ENCODE measurements at regions of chr1 and their contacts with region 1.

Region 1: DNA sequence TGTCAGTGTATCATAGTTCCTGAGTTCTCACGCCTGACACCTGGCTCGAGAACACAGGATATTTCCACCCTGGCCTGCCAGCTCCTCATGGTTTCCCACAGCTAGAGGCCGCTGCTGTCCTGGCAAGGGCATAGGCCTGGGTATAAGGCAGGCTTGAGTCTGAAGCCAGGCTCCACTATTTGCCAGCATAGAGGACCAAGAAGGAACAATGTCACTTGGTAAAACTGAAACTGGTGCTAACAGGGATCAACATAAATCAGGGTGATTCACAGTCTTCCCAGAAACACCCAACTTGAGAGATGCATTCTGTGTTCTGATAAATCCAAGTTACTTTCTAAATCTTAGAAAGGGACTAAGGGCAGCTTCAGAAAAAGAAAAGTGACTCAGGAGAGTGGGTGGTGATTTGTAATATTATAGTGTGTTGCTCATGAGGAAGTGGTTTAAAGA is 6.9 kb upstream of the S100A2 start:
- DNase-seq: peak; percentile 93
- H3K4me3 ChIP-seq: no peak overlapping the region
- H3K27ac ChIP-seq: no peak overlapping the region
- H3K4me1 ChIP-seq: peaks cover 15% of the 10 kb centered on the region
- H3K27me3 ChIP-seq: no peaks in the 10 kb centered on the region
- CTCF ChIP-seq: peak; percentile 89 to 96
- POLR2A ChIP-seq: no peak

Region 2: DNA sequence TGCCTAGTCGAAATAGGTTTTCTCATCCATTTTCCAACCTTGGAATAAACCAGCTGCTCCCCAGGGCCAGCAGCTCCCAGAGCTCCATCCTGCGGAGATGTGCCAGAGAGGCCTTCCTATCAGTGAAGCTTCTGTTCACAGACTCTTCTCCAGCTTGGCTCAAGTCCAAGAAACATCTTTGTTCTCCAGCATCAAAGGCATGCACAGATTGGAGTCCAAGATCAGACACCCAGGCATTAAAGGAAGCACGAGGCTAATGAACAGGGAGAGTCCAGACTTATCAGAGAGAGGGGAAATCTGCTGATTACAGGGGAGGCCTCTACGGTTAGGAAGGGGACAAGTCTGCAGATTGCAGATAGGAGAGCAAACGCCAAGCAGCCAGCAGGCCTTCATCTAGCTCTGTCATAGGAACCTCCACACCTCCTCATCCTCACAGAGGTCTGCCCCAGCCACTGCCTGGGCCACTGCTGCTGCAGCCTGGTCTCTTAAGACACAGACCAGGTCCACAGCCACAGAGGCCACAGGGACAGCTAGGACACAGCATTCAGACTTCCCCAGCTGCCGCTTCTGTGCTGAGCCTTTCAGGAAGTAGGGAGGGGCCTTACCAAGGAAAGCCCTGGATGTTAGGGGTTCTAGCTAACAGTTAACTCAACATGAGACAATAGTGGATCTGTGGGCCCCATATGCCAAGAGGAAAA is 351.8 kb before region 1 on chr1:
- CTCF ChIA-PET with region 1: no interaction called
- POLR2A ChIA-PET with region 1: no interaction called
- dilution Hi-C with region 1: no loop called
- intact Hi-C with region 1: no loop called
- DNase-seq: no peak
- H3K4me3 ChIP-seq: no peak overlapping the region
- H3K27ac ChIP-seq: no peak overlapping the region
- H3K4me1 ChIP-seq: no peaks in the 10 kb centered on the region
- H3K27me3 ChIP-seq: no peaks in the 10 kb centered on the region
- CTCF ChIP-seq: no peak
- POLR2A ChIP-seq: no peak

Region 3: DNA sequence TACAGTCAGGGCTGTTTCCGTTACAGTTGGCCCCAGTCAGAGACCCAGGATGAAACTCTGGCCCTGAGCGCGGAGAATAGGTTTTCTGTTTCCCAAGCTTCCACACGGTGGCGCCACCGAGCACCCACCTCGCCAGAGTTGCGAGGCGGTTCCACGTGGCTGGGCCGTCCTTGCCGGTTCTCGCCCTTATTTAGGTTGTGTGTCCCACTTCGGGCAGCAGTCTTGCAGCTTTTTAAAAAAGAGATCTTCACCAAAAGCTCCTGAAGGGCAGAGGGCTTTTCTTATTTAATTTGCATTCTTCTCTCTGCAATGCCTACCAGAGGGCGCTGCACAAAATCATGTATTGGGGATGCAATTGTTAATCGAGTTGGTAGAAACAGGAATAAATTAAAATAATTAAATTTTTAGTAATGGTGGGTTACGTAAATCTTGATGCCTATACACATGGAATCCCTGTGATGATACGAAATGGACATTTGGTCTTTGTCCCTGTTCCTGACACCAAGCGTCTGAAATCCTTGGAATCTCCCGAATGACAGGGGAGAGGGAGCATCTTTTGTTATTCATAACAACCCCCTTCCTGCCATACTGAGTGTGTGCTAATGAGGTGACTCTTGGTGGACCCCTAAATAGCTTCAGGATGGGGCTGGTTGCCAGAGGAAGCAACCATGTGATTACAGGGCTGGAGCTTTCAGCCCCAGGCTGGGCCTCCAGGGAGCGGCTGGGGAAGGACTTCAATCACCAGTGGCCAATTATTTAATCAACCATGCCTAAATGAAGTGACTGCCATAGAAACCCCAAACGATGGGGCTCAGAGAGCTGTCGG is 106.6 kb before region 1 on chr1:
- CTCF ChIA-PET with region 1: no interaction called
- POLR2A ChIA-PET with region 1: no interaction called
- dilution Hi-C with region 1: no loop called
- intact Hi-C with region 1: loop called (anchors 1 kb)
- DNase-seq: peak; percentile 9
- H3K4me3 ChIP-seq: no peak overlapping the region
- H3K27ac ChIP-seq: no peak overlapping the region
- H3K4me1 ChIP-seq: no peaks in the 10 kb centered on the region
- H3K27me3 ChIP-seq: peaks cover 0 to 13% of the 10 kb centered on the region in 2 experiments
- CTCF ChIP-seq: peak; percentile 75 to 90
- POLR2A ChIP-seq: no peak

Region 4: DNA sequence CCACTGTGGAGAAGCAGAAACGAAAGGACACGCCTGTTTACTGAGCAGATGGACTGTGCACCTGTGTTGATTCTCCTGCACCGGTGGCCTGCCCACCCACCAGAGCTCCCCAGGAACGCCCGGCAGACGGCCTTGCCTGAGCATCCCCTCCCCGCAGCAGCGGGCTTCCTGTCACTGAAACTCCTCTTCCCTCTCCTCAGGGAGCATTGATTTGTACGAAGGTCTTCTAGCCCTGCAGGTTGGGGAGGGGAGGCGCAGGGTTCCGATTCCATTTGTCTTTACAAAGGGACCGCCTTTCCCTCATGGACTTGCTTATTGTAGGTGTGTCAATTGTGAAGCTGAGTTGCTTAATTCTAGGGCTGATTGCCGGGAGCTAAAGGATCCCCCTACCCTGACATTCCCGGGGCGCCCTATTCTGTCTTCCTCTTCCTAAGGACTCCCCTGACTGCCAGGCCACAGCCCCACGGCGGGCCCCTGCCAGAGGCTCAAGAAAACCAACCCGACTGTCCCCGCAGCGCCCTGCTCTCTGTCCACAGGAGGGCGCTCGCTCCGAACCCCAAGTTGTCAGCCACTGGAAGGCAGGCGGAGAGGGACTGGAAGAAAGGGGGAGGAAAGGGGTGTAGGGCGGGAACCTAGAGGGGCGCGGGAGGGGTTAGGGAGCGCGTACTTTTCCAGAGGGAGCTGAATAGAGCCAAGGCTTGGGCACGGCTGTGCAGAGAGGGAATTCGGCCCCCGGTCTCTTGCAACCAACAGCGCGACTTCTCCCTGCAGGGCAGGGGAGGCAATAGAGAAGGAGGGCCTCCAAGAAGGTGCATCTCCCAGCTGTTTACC is 39.6 kb before region 1 on chr1:
- CTCF ChIA-PET with region 1: interaction called, 216 read pairs
- POLR2A ChIA-PET with region 1: interaction called, 14 read pairs
- dilution Hi-C with region 1: no loop called
- intact Hi-C with region 1: loop called (anchors 1 kb)
- DNase-seq: peak; percentile 85
- H3K4me3 ChIP-seq: peak overlapping the region in 2 of 3 experiments; percentile 5 to 81
- H3K27ac ChIP-seq: peak overlapping the region; percentile 96
- H3K4me1 ChIP-seq: peaks cover 43% of the 10 kb centered on the region
- H3K27me3 ChIP-seq: no peaks in the 10 kb centered on the region
- CTCF ChIP-seq: peak; percentile 90
- POLR2A ChIP-seq: no peak

Region 5: GRCh38 chr1:153608742-153609584 is 36.4 kb after region 1 on chr1:
- CTCF ChIA-PET with region 1: interaction called, 121 read pairs
- POLR2A ChIA-PET with region 1: interaction called, 6 read pairs
- dilution Hi-C with region 1: no loop called
- intact Hi-C with region 1: loop called (anchors 1 kb)
- DNase-seq: peak; percentile 98
- H3K4me3 ChIP-seq: peak overlapping the region; percentile 2 to 87 (median 86)
- H3K27ac ChIP-seq: peak overlapping the region; percentile 98
- H3K4me1 ChIP-seq: peaks cover 40% of the 10 kb centered on the region
- H3K27me3 ChIP-seq: no peaks in the 10 kb centered on the region
- CTCF ChIP-seq: no peak
- POLR2A ChIP-seq: peak; percentile 93

Region 6: DNA sequence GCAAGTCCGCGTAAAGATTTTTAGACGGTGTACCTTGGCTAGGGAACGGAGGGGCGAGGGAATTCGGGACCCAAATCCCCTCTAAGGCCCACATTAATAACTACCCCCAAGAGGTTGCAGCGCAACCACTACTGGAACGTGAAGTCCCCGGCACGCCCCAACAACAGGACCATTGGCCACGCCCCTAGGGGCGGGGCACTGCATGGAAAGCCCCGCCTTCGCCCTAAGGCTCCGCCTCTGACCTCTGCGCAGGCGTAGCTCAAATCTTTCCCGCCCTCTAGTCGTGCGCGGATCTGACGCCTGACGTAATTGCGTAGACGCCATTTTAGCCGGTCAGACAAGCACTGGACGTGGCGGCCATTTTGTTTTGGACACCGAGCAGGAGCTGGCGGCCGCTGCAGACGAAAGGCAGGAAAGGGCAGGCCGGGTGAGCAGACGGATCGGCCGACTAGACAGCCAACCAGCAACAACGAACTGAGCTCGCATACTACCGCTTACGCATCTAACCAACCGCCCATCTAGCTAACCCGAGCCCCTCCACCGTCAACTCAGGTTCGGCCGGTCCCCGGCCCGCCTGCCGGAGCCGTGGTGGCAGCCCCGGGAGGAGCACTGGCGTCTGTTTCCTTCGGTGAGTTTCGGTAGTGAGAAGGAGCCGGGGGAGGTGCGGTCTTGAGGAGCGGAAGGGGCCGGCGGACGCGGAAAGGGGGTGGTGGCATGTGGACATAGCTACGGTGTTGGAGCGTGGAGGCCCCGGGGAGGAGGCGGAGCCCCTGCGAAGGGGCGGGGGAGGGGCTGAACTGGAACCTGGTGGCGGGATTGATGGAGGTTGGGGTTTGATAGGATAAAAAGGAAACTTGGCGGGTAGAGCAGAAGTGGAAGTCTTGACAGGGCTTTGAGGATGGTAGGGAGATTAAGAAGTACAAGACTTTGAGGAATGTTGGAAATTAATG is 61.4 kb after region 1 on chr1 and contains the start of gene CHTOP:
- CTCF ChIA-PET with region 1: interaction called, 145 read pairs
- POLR2A ChIA-PET with region 1: interaction called, 6 read pairs
- dilution Hi-C with region 1: no loop called
- intact Hi-C with region 1: loop called (anchors 1 kb)
- DNase-seq: peak; percentile 100
- H3K4me3 ChIP-seq: peak within 1 kb of the TSS; percentile 65 to 96 (median 93)
- H3K27ac ChIP-seq: peak within 1 kb of the TSS; percentile 94
- H3K4me1 ChIP-seq: peaks cover 11% of the 10 kb centered on the region
- H3K27me3 ChIP-seq: no peaks in the 10 kb centered on the region
- CTCF ChIP-seq: no peak
- POLR2A ChIP-seq: peak; percentile 78
- total RNA-seq, gene CHTOP: 72.1 and 74.4 TPM in 2 replicates

Region 7: DNA sequence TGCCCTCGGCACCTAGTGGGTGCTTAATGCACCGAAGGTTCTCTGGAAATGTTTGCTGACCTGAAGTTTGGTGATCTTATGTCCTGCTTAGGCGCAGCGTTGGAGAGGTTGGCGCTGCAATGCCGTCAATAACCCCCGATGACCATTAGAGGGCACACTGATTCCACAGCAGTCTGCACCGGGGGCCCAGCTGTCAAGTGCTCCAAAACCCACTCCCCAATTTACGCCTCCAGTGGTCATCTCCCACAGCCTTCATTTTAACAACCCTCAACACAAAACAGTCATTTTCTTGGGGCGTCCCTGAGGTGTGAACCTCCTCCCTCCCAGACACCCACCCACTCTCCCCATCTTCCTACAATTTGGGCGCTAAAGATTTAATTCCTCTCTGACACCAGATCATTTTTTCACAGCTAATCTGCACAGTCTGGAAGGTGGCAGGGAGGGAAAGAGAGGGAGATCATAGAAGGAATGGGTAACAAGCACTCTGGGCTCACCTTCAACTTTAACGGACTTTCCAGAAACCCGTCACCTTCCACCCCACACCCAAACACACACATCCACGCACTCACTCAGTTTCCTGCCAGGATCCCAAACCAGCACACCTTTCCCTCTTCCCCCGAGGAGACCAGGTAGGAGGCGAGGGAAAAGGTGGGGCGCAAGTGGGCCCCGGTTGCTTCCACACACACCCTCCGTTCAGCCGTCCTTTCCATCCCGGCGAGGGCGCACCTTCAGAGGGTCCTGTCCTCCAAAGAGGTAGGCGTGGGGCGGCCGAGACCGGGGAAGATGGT is 105.3 kb after region 1 on chr1:
- CTCF ChIA-PET with region 1: interaction called, 5 read pairs
- POLR2A ChIA-PET with region 1: no interaction called
- dilution Hi-C with region 1: no loop called
- intact Hi-C with region 1: loop called (anchors 1 kb)
- DNase-seq: peak; percentile 72
- H3K4me3 ChIP-seq: peak overlapping the region; percentile 15 to 44 (median 22)
- H3K27ac ChIP-seq: no peak overlapping the region
- H3K4me1 ChIP-seq: peaks cover 11% of the 10 kb centered on the region
- H3K27me3 ChIP-seq: peaks cover 4 to 5% of the 10 kb centered on the region in 2 experiments
- CTCF ChIP-seq: peak; percentile 91 to 92
- POLR2A ChIP-seq: no peak

Region 8: GRCh38 chr1:154115180-154115579 is 542.6 kb after region 1 on chr1:
- CTCF ChIA-PET with region 1: no interaction called
- POLR2A ChIA-PET with region 1: no interaction called
- dilution Hi-C with region 1: no loop called
- intact Hi-C with region 1: no loop called
- DNase-seq: no peak
- H3K4me3 ChIP-seq: no peak overlapping the region
- H3K27ac ChIP-seq: no peak overlapping the region
- H3K4me1 ChIP-seq: no peaks in the 10 kb centered on the region
- H3K27me3 ChIP-seq: no peaks in the 10 kb centered on the region
- CTCF ChIP-seq: no peak
- POLR2A ChIP-seq: no peak